ENCODE measurements at regions of chr7 and their contacts with region 1.

Region 1: DNA sequence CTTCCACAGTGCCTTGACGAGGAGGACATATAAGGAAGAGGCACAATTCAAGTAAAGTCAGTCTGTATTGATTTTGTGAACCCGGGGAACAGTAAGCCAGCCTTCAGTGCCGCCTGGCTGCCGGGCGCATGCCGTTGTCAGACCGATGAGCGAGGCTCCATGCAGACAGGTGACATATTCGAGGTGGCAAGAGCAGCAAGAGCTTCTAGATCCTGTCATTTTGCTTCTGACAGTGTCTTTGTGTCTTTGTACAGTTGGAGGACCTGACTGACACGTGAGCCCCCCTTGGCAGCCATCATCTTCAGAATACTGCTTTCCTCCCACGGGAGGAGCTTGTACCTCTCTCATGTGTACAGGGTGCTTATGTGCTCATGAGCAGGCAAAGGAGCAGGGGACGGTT is 387.5 kb upstream of the GALNT17 start:
- DNase-seq: no peak
- ATAC-seq: no peak
- H3K4me3 ChIP-seq: no peak overlapping the region
- H3K27ac ChIP-seq: no peak overlapping the region
- H3K4me1 ChIP-seq: peaks cover 6 to 10% of the 10 kb centered on the region in 2 donors
- H3K27me3 ChIP-seq: no peaks in the 10 kb centered on the region
- CTCF ChIP-seq: no peak
- POLR2A ChIP-seq: no peak

Region 2: GRCh38 chr7:70506434-70506833 is 238.1 kb before region 1 on chr7:
- in situ Hi-C with region 1: no loop called
- intact Hi-C with region 1: no loop called
- DNase-seq: no peak
- ATAC-seq: no peak
- H3K4me3 ChIP-seq: no peak overlapping the region
- H3K27ac ChIP-seq: no peak overlapping the region
- H3K4me1 ChIP-seq: peaks cover 3 to 6% of the 10 kb centered on the region in 2 donors
- H3K27me3 ChIP-seq: no peaks in the 10 kb centered on the region
- CTCF ChIP-seq: no peak
- POLR2A ChIP-seq: no peak

Region 3: DNA sequence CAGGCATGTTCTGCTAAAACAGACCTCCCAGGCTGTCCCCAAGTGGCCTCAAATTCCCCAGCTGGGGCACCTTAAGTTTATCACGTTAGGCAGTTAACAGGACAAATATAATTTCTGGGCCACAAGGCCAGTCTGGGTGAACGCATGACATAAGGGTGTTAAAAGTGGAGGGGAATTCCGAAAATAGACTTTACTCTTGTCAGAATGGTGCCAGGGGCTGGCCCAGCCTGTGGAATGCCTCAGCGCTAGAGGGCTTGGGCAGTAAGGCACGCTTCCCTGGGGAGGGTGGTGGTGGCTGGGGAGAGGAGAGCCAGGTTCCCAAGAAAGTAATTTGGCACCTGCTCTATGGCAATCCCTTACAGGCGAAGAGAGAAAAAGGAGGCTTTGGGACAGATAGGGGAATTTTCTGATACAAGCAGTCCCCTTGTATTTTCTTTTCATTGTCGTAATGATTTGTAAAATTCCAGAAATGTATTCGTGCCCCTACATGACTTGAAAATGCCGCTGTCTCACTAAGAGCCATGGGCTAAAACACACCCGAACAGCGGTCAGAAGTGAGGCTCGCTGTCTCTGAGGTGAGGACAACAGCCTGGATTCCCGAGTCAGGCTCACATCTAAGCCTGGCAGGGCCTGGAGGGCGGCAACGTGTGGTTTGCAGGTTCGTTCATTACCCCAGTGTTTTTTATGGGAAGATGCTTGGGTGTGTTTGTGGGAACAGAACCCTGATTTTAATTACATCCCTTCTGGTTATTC is 75.7 kb before region 1 on chr7:
- in situ Hi-C with region 1: no loop called
- intact Hi-C with region 1: no loop called
- DNase-seq: peak; percentile 58 to 82
- ATAC-seq: peak; percentile 95 to 98
- H3K4me3 ChIP-seq: no peak overlapping the region
- H3K27ac ChIP-seq: peak overlapping the region; percentile 13 to 59 (median 46)
- H3K4me1 ChIP-seq: peaks cover 7 to 20% of the 10 kb centered on the region in 2 donors
- H3K27me3 ChIP-seq: no peaks in the 10 kb centered on the region
- CTCF ChIP-seq: no peak
- POLR2A ChIP-seq: no peak

Region 4: GRCh38 chr7:70763961-70764691 is 19.6 kb after region 1 on chr7:
- in situ Hi-C with region 1: no loop called
- intact Hi-C with region 1: loop called (anchors 2 kb)
- DNase-seq: no peak
- ATAC-seq: no peak
- H3K4me3 ChIP-seq: no peak overlapping the region
- H3K27ac ChIP-seq: no peak overlapping the region
- H3K4me1 ChIP-seq: no peaks in the 10 kb centered on the region
- H3K27me3 ChIP-seq: no peaks in the 10 kb centered on the region
- CTCF ChIP-seq: no peak
- POLR2A ChIP-seq: no peak

Region 5: DNA sequence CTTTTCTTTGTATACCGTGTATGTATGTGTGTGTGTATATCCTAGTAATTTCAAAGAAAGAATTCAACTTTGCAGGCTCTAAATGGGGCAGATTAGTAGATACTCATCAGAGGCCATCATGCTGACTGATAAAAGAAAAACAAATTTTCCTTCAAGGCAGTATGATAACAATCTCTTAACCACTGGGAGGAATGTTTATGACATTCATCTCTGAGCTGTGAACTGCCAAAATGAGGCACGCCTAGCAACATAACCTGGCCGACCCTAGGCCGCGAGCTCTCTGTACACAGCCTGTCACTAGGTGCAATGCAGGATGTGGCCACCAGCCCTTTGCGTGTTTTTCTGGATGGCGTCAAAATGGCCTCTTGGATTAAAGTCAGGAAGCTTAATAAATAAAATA is 43.8 kb after region 1 on chr7:
- in situ Hi-C with region 1: no loop called
- intact Hi-C with region 1: no loop called
- DNase-seq: no peak
- ATAC-seq: no peak
- H3K4me3 ChIP-seq: no peak overlapping the region
- H3K27ac ChIP-seq: no peak overlapping the region
- H3K4me1 ChIP-seq: no peaks in the 10 kb centered on the region
- H3K27me3 ChIP-seq: no peaks in the 10 kb centered on the region
- CTCF ChIP-seq: no peak
- POLR2A ChIP-seq: no peak